Mammary epithelial cell (primary cell): ENCODE measurements at regions of chr3 and their contacts with region 1.

Region 1: GRCh38 chr3:169764452-169765274 is at the start of gene TERC:
- DNase-seq: peak; percentile 74
- H3K4me3 ChIP-seq: peak within 1 kb of the TSS; percentile 33 to 67 (median 54)
- H3K27ac ChIP-seq: peak within 1 kb of the TSS; percentile 20
- H3K4me1 ChIP-seq: peaks cover 6% of the 10 kb centered on the region
- H3K27me3 ChIP-seq: no peaks in the 10 kb centered on the region
- CTCF ChIP-seq: no peak
- total RNA-seq, gene TERC: 316 TPM in 1 of 2 donors, not detected in the other

Region 2: GRCh38 chr3:169966428-169966950 is 201.8 kb after region 1 on chr3 and contains the start of gene SEC62:
- CTCF ChIA-PET with region 1: interaction called, 4 read pairs
- dilution Hi-C with region 1: no loop called
- in situ Hi-C with region 1: no loop called
- intact Hi-C with region 1: loop called (anchors 5 kb)
- DNase-seq: peak; percentile 83
- H3K4me3 ChIP-seq: peak within 1 kb of the TSS; percentile 71 to 97 (median 87)
- H3K27ac ChIP-seq: peak within 1 kb of the TSS; percentile 93
- H3K4me1 ChIP-seq: peaks cover 6% of the 10 kb centered on the region
- H3K27me3 ChIP-seq: no peaks in the 10 kb centered on the region
- CTCF ChIP-seq: peak; percentile 11 to 49
- total RNA-seq, gene SEC62: 25.2 to 68.7 TPM

Region 3: DNA sequence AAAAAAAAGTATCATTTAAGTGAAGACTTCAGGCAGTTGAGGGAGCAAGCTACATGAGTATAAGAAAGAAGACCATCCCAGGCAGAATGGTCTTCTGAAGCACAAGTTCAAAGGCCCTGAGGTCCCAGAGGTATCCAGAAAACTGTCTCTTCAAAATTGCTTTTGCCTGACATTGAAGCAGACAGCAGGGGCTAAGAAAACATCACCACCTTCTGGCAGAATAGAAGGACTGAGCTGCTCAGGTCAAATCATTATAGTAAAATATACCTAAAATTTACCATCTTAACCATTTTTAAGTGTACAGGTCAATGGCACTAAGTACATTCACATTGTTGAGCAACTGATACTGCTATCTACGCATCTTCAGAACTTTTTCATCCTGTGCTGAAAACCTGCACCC is 289.5 kb after region 1 on chr3:
- CTCF ChIA-PET with region 1: no interaction called
- dilution Hi-C with region 1: no loop called
- in situ Hi-C with region 1: no loop called
- intact Hi-C with region 1: loop called (anchors 1 kb)
- DNase-seq: no peak
- H3K4me3 ChIP-seq: no peak overlapping the region
- H3K27ac ChIP-seq: no peak overlapping the region
- H3K4me1 ChIP-seq: no peaks in the 10 kb centered on the region
- H3K27me3 ChIP-seq: peaks cover 3% of the 10 kb centered on the region
- CTCF ChIP-seq: peak in 1 of 2 donors; percentile 38

Region 4: DNA sequence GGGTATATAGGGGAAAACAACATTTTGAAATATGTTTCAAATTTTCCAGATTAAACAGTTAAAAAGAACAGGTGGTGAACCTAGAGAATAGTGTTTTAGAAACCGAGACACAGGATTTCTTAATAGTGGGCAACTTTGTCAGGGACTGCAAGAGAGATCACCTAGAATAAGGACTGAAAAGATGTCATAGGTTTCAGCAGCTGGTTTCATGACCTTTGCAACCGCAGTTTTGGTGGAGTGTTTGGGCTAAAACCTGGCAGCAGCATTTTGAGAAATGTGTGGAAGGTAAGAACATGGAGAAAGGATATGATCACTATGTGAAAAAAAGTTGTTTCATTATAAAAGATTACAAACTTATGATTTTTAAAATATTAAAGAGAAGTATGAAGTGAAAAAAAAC is 492.5 kb after region 1 on chr3:
- CTCF ChIA-PET with region 1: no interaction called
- dilution Hi-C with region 1: no loop called
- in situ Hi-C with region 1: no loop called
- intact Hi-C with region 1: loop called (anchors 10 kb)
- DNase-seq: no peak
- H3K4me3 ChIP-seq: no peak overlapping the region
- H3K27ac ChIP-seq: no peak overlapping the region
- H3K4me1 ChIP-seq: peaks cover 13% of the 10 kb centered on the region
- H3K27me3 ChIP-seq: no peaks in the 10 kb centered on the region
- CTCF ChIP-seq: no peak